Left ventricle myocardium superior (tissue), 1 donor: ENCODE measurements at regions of chr12 and their contacts with region 1.

Region 1: GRCh38 chr12:117155278-117156060 is 34.8 kb downstream of the FBXO21 start:
- DNase-seq: peak; percentile 64
- ATAC-seq: peak; percentile 56

Region 2: DNA sequence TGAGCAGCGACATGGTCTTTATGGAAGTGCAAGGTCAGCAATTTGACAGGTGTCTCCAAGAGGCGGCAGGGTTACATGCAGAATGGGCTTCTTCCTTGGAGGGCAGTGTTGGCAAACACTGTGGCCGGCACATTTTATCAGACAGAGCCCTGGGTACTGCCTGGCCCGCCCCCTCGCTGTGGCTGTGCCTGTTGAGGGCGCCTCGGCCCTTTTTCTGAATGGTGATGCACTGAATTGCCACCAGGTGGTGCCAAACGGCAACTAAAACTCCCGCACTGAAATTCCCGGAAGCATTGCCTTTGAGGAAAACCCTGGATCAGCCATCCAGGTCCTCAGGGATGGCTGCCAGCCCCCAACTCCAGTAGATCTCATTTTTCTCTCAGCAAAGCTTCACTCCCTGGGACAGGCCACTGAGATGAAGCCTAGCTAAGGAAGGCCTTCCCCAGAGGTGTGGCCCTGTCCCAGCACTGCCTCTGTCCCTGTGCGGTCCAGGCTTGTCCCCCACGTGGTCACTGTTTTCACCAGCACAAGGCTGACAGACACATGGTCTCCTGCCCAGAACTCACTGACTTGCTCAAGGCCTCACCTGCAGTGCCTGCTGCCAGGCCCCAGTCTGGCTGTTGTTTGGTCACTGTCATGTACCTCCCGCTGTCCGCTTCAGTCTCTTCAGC is 129.9 kb before region 1 on chr12:
- intact Hi-C with region 1: loop called (anchors 10 kb)
- DNase-seq: peak; percentile 75
- ATAC-seq: peak; percentile 87

Region 3: GRCh38 chr12:117243488-117243887 is 88.0 kb after region 1 on chr12:
- intact Hi-C with region 1: no loop called
- DNase-seq: no peak
- ATAC-seq: no peak

Region 4: DNA sequence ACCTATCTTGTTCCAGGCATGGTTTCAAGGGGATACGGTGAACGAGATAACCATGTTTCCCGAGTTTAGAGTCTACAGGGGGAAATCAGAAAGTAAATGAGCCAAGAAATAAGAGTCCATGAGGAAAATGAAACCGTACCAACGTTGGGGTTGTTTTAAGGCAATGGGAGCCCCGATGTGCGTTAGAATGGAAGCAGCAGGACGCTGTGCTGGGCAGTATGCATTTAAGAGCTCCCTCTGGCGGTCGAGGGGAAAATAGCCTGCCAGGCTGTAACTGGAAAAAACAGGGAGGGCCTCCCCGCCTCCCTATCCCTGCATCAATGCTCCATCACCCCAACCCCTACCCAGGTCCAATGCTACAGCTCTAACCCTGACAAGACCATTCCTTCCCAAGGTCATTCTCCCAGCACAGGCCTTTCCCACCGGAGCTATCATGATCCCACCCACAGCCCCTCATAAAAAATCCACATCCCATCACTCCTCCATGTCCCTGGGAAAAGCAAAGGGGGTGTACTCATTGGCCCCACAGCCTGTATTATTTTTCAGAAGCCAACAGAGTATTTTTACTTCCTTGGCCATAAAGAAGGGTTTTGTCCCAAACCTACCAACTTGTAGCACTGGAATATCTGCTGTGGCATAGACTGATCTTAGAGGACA is 432.3 kb after region 1 on chr12:
- intact Hi-C with region 1: no loop called
- DNase-seq: peak; percentile 54
- ATAC-seq: peak; percentile 56